Activated naive CD4-positive, alpha-beta T cell treated with anti-CD3 and anti-CD28 coated beads for 36 hours (primary cell): ENCODE measurements at regions of chr12 and their contacts with region 1.

Region 1: DNA sequence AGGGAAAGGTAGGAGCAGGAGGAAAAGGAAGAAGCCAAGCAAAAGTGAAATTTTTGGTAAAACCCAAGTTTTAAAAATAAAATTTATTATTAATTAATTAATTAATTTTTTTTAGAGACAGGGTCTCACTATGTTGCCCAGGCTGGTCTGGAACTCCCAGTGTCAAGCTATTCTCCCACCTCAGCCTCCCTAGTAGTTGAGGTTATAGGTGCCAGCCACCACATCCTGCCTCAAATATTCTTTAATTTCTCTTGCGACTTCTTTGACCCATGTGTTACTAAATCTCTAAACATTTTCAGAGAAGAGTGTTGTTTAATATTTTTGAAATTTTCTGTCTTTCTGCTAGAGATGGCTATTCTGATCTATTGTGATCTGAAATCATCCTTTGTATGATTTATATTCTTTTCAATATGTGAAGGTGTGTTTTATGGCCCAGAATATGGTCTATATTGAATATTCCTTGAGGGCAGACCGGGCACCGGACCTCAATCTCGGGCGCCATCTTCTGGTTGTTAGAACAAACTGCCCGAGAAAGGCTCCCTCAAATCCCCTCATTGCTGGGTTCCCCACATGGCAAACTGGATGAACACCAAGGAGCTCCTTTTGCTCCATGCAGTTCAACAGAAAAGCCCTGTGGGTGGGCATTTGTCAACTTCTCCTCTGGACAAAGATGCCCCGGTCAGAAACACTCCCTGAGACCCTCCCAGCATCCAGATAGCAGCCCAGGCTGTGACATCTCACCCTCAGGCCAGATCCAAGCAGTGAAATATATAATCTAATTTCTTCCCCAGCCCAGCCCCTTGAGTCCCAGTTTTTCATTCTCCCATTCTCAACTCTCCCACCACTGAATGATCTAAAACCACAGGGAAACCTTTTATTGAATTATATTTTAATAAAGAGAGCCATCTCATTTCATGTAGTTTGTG is 110.5 kb downstream of the ASCL4 start:
- DNase-seq: peak; percentile 64
- H3K4me3 Mint-ChIP-seq: no peak overlapping the region
- H3K27ac Mint-ChIP-seq: no peak overlapping the region
- H3K4me1 Mint-ChIP-seq: no peaks in the 10 kb centered on the region
- H3K27me3 Mint-ChIP-seq: peaks cover 16% of the 10 kb centered on the region

Region 2: DNA sequence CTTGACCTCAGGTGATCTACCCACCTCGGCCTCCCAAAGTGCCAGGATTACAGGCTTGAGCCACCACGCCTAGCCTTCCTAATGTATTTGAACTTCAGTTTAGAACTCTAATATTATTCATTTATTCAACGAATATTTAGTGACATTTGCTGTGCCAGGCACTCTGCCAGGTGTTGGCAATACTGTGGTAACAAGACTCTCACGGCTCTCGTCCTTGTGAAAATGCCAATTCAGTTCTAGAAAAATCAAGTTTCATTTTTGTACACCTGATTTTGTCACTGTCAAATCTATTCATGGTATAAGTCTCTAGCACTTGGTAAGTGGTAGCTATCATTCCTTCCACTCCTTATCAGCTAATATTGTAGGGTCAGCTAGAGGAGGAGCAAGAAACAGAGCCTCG is 205.7 kb before region 1 on chr12:
- CTCF ChIA-PET with region 1: interaction called, 58 read pairs
- intact Hi-C with region 1: loop called (anchors 1 kb)
- DNase-seq: no peak
- H3K4me3 Mint-ChIP-seq: no peak overlapping the region
- H3K27ac Mint-ChIP-seq: no peak overlapping the region
- H3K4me1 Mint-ChIP-seq: peaks cover 1% of the 10 kb centered on the region
- H3K27me3 Mint-ChIP-seq: peaks cover 8% of the 10 kb centered on the region